ENCODE measurements at regions of chr22 and their contacts with region 1.

Region 1: GRCh38 chr22:40679964-40680818 is 907 bp downstream of the MCHR1 start:
- DNase-seq: no peak
- H3K4me3 ChIP-seq: peak overlapping the region; percentile 55
- CTCF ChIP-seq: peak; percentile 15

Region 2: DNA sequence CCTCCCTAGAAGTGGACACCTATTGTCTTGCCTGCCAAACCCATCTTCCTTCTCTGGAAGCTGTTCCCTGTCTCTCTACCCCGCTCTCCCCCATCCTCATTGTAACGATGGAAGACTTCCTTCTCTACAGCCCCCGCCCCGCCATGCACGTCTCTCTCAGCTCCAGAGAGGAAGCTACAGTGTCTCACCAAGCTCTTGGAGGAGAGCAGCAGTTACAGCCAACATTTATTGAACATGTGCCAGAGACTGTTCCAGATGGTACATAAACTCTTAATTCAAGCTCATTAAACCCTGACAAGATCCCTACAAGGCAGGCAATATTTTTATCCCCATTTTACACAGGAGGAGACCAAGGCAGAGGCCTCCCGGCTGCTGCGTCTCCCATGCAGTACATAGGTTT is 14.2 kb after region 1 on chr22:
- CTCF ChIA-PET with region 1: interaction called, 14 read pairs
- POLR2A ChIA-PET with region 1: no interaction called
- DNase-seq: no peak
- H3K4me3 ChIP-seq: no peak overlapping the region
- CTCF ChIP-seq: no peak

Region 3: DNA sequence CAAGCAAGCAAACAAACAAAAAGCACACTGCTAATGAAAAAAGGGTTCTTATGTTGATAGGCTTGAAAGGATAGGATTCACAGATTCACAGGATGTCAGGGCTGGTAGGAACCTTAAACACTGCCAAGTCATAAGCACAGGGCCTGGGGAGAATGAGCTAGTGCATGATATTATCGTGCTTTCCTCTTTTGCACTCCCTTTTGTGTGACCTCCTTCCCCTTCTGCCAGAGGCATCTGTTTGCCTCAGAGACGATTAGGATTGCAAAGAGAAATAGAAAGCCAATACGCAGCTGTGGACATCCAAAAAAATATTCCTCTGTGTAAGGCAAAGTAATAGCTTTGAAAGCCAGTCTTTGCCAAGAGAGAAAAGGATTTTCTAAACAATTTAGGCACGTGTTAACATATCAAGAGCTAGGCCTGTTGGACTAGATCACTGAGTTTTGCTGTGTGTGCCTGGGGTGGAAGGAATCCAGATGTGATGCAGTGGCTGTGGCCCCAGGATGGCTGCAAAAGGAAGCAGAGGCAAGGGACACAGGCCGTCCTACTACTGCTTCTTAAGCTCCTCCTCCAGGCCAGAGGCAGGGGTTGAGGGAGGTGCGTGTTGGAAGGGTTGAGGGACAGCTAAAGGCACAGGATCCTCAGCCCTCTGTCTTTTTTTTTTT is 29.7 kb after region 1 on chr22:
- CTCF ChIA-PET with region 1: interaction called, 24 read pairs
- POLR2A ChIA-PET with region 1: interaction called, 3 read pairs
- DNase-seq: no peak
- H3K4me3 ChIP-seq: no peak overlapping the region
- CTCF ChIP-seq: no peak

Region 4: DNA sequence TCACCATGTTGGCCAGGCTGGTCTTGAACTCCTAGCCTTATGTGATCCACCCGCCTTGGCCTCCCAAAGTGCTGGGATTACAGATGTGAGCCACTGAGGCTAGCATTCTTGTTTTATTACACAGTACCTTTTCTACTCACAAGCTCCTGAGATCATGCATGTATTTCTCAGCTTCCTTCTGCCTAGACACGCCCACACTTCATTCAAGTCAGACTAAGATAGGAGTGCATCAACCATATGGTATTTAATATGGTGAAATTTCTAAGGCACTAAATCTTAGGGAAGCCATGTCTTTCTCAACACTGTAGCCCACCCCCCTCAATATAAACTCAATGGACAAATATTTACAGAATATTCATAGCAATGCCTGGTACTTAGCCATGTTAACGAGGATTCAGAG is 76.9 kb after region 1 on chr22:
- CTCF ChIA-PET with region 1: interaction called, 26 read pairs
- POLR2A ChIA-PET with region 1: no interaction called
- DNase-seq: no peak
- H3K4me3 ChIP-seq: no peak overlapping the region
- CTCF ChIP-seq: no peak

Region 5: DNA sequence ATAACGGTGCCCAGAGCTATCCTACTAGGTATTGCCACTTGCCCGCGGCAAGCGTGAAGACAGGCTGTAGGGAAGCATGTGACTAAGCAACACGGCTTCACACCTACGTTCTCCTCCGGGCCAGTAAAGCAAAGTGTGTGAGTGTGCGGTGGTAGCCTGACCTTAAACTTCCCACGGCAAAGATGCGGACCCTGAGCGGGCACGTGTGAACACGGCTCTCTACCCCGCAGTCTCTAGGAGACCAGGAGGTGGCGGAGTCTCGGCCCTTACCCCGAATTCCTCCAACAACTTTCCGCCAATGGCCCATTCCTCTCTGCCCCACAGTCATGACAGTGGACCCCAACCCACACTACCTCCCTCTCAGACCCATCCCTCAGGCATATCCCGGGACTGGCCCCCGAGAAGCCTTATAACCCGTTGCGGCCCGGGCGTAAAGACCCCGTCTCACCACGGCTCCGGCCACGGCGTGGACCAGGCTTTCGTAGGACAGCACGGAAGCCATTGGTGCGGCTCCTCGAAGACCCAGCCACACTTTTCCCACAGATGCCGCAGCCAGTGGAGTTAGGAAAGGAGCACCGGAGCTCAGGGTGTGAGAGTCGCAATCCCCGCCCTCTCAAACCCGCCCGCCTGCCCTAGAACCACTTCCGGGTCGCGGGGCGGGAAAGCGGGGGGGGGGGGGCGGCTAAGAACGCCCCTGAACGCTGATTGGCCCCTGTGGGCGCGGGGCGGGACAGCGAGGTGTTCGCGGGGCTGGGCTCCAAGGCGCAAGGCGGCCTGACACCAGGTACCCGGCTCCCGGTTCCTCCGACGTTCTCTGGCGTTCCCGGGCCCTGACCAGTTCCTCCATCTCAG is 138.8 kb after region 1 on chr22 and contains the start of gene SLC25A17:
- CTCF ChIA-PET with region 1: interaction called, 15 read pairs
- POLR2A ChIA-PET with region 1: interaction called, 3 read pairs
- DNase-seq: no peak
- H3K4me3 ChIP-seq: peak within 1 kb of the TSS; percentile 99
- CTCF ChIP-seq: peak; percentile 64

Region 6: GRCh38 chr22:40898850-40899357 is 218.7 kb after region 1 on chr22:
- CTCF ChIA-PET with region 1: interaction called, 40 read pairs
- POLR2A ChIA-PET with region 1: no interaction called
- DNase-seq: no peak
- H3K4me3 ChIP-seq: no peak overlapping the region
- CTCF ChIP-seq: peak; percentile 40

Measured in AG04449 (cell line).